ENCODE measurements at regions of chr1 and their contacts with region 1.

Region 1: DNA sequence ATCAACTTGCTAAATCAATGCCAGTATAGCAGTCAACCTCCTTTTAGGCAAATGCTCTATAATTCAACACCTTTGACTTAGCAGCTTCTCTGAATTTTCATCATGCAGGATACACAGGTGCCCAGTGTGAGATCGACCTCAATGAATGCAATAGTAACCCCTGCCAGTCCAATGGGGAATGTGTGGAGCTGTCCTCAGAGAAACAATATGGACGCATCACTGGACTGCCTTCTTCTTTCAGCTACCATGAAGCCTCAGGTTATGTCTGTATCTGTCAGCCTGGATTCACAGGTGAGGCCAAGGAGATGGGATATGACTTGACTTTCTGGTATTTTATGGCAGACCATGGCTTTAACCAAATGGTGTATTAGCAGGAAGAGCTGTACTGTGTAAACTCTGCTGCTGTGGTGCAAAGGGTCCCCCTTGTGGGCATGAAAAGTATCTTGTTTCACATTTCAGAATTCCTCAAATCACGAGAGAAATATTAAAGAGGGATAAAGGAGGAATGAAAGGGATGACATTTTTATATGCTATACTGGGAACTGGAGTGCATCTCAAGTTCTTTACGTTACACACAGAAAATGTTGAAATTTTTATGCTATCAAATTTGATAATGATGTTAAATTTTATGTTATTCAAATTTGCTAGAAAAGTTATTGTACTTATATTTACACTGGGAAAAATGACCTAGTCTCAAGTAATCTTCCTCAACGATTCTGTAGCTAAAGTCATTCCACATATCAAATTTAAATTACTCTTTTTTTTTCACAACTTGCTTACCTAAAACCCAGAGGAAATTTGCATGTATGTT is 88.9 kb downstream of the CRB1 start:
- DNase-seq: no peak
- H3K4me3 Mint-ChIP-seq: no peak overlapping the region
- H3K27ac Mint-ChIP-seq: no peak overlapping the region
- H3K4me1 Mint-ChIP-seq: no peaks in the 10 kb centered on the region
- H3K27me3 Mint-ChIP-seq: peaks cover 1% of the 10 kb centered on the region

Region 2: DNA sequence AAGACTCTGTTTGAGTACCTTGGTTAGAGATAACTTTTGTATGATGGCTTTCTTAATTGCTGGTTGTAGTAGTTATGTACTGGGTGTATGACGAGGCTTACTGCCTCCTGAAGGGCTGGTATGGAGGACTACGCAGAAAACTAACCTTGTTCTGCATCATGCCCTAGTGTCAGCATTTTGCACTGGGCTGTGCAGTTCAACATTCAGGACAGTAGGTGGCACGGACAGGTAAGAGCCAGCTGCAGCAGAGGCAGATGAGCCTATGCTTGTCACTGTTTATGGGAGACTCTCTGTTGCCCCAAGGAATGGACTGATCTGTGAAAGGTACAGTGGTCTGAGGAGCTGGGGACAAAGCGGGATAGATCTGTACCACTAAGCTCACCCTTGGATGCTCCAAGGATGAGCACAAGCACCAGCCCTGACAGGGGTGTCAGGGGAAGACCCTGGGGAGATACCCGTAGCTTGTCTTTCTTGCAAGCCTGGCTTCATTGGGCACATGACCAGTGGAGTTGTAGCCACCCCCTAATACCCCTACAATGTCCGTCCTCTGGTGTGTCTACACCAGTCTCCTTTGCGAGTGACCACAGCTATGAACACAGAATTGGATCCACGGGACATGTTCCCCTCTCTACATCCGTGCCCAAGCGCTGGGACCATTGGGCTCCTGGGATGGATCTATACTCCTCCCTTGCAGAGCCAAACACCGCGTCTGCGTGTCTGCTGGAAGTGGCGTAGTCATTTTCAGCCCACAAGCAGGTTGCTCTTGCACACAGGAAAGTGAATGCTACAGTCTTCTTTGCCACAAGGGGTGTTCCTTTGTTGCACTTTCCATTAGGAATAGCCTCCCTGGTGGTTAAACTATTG is 633.4 kb before region 1 on chr1:
- intact Hi-C with region 1: loop called (anchors 10 kb)
- DNase-seq: peak; percentile 31
- H3K4me3 Mint-ChIP-seq: no peak overlapping the region
- H3K27ac Mint-ChIP-seq: no peak overlapping the region
- H3K4me1 Mint-ChIP-seq: no peaks in the 10 kb centered on the region
- H3K27me3 Mint-ChIP-seq: no peaks in the 10 kb centered on the region

Region 3: GRCh38 chr1:196738730-196739129 is 618.2 kb before region 1 on chr1:
- intact Hi-C with region 1: loop called (anchors 5 kb)
- DNase-seq: no peak
- H3K4me3 Mint-ChIP-seq: no peak overlapping the region
- H3K27ac Mint-ChIP-seq: no peak overlapping the region
- H3K4me1 Mint-ChIP-seq: no peaks in the 10 kb centered on the region
- H3K27me3 Mint-ChIP-seq: no peaks in the 10 kb centered on the region

Region 4: DNA sequence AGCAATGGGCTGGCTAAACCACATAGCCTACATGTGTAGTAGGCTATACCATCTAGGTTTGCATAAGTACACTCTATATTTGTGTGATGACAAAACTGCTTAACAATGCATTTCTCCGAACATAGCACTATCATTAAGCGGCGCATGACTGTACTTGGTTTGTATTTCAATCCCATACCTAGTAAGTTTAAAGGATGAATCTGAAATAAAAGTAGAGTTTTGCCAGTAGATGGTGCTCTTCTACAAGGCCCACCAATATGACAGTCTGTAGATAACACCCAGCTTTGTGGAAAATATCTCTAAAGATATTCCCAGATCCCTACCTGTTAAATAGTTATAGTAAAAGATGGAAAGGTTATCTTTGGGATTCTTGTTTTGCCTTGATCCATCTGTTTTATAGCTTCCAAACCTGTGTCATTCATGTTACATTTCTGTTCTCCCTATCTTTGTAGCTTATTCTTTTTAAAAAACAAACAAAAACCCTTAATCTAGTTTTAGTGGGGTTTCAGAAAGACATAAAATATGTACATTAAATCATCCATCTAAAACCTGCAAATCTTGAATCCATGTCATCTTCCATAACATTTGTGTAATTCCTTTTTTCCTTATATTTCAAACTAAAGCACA is 176.6 kb before region 1 on chr1:
- intact Hi-C with region 1: loop called (anchors 1 kb)
- DNase-seq: no peak
- H3K4me3 Mint-ChIP-seq: no peak overlapping the region
- H3K27ac Mint-ChIP-seq: no peak overlapping the region
- H3K4me1 Mint-ChIP-seq: peaks cover 4% of the 10 kb centered on the region
- H3K27me3 Mint-ChIP-seq: no peaks in the 10 kb centered on the region

Measured in activated T-helper 2 cell treated with anti-CD3 and anti-CD28 coated beads, Interferon-gamma antibody, Interleukin-2, Interleukin-4, amounts not matched to agents 10 μg/mL and 5 μg/mL and 100 μg/mL, durations not matched to agents 14 hours and 24 hours and 36 hours (primary cell).